Heart left ventricle (tissue), 16 donors: ENCODE measurements at regions of chr1 and their contacts with region 1.

Region 1: DNA sequence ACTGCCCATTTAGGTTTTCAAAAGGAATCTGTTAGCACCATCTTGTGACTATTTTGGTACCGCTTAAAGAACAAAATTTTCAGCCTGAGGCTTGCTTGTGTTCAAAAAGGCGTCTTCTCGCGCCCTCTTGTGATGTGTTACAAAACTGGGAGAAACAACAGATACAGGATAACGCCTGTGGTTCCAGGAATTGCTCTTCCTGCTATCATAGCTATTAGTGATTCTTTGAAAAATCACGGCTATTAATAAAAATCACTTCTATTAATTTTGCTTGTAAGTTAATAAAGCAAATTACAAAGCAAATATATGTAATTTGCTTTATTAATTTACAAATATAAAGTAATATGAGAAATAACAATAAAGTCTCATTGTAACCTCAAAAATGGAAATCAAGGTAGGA is 82.2 kb upstream of the ABCD3 start:
- DNase-seq: peak in 4 of 5 donors; percentile 67 to 79 (median 76)
- ATAC-seq: peak; percentile 65 to 96 (median 90)
- H3K4me3 ChIP-seq: peak overlapping the region in 1 of 12 donors; percentile 19
- H3K27ac ChIP-seq: peak overlapping the region in 3 of 12 donors; percentile 61 to 83 (median 74)
- H3K4me1 ChIP-seq: peaks cover 0 to 20% (median 13%) of the 10 kb centered on the region in 12 donors
- H3K27me3 ChIP-seq: peaks cover 0 to under 1% (median 0%) of the 10 kb centered on the region in 9 donors
- CTCF ChIP-seq: peak; percentile 71 to 98 (median 95)
- POLR2A ChIP-seq: no peak

Region 2: DNA sequence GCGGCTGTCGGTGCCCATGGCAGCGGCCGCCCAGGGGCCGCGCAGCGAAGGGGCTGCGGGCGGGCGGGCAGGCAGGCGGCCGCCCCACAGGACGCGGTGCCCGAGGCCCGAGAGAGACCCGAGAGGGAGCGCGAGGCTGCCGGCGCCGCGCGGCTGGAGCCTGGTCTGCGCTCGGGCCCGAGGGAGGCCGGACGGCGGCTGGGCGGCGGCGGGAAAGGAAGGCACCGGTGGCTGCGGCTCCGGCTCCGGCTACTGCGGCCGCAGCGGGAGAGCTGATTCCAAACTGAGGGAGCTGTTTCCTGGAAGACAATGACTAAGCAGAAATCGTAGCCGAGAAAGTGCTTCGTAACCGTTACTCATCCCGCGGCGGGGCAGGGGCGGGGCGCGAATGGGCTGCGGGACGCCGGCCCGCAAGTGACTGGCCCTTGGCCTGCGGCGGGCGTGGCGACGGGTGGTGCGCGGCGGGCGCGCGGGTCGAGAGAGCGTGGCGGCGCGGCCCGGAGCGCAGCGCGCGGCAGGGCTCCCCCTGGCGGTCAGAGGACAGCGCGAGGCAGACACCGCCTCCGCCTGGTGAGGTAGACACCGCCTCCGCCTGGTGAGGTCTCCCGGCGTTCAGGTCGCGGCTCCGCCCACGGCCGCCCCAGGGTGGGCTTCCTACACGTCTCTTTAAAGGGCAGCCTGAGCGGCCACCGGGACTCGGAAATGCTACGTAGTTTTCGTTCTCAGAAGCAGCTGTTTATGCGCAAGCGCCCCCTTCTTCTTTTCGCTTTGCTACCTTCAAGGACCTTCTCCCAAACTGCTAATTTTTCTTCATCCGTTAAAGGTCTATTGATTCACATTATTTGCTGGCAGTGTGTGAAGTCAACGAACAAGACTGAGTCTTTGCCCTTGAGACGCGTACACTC is 426.6 kb before region 1 on chr1 and contains the start of gene GCLM:
- intact Hi-C with region 1: loop called in 1 of 10 experiments (anchors 10 kb)
- DNase-seq: peak; percentile 88 to 97 (median 95)
- ATAC-seq: peak; percentile 93 to 98 (median 96)
- H3K4me3 ChIP-seq: peak within 1 kb of the TSS; percentile 70 to 99 (median 88)
- H3K27ac ChIP-seq: peak within 1 kb of the TSS; percentile 74 to 92 (median 83)
- H3K4me1 ChIP-seq: peaks cover 0 to 41% (median 13%) of the 10 kb centered on the region in 12 donors
- H3K27me3 ChIP-seq: no peaks in the 10 kb centered on the region
- CTCF ChIP-seq: peak; percentile 68 to 100 (median 92)
- POLR2A ChIP-seq: peak in 1 of 2 donors; percentile 69
- total RNA-seq, gene GCLM: 4.2 to 21.9 (median 12.5) TPM

Region 3: GRCh38 chr1:94025383-94026340 is 310.3 kb before region 1 on chr1:
- intact Hi-C with region 1: loop called (anchors 1 to 5 kb)
- DNase-seq: no peak
- ATAC-seq: peak in 2 of 4 donors; percentile 44 to 51
- H3K4me3 ChIP-seq: peak overlapping the region in 1 of 12 donors; percentile 4
- H3K27ac ChIP-seq: no peak overlapping the region
- H3K4me1 ChIP-seq: peaks cover 0 to 23% (median 5%) of the 10 kb centered on the region in 12 donors
- H3K27me3 ChIP-seq: no peaks in the 10 kb centered on the region
- CTCF ChIP-seq: peak; percentile 72 to 89 (median 81)
- POLR2A ChIP-seq: no peak

Region 4: GRCh38 chr1:94039514-94039870 is 296.5 kb before region 1 on chr1:
- intact Hi-C with region 1: loop called in 4 of 10 experiments (anchors 1 to 2 kb)
- DNase-seq: peak; percentile 69 to 86 (median 74)
- ATAC-seq: peak; percentile 10 to 51 (median 32)
- H3K4me3 ChIP-seq: no peak overlapping the region
- H3K27ac ChIP-seq: peak overlapping the region; percentile 48 to 80 (median 60)
- H3K4me1 ChIP-seq: peaks cover 4 to 44% (median 31%) of the 10 kb centered on the region in 12 donors
- H3K27me3 ChIP-seq: peaks cover 0 to 9% (median 0%) of the 10 kb centered on the region in 9 donors
- CTCF ChIP-seq: peak; percentile 77 to 92 (median 87)
- POLR2A ChIP-seq: no peak

Region 5: DNA sequence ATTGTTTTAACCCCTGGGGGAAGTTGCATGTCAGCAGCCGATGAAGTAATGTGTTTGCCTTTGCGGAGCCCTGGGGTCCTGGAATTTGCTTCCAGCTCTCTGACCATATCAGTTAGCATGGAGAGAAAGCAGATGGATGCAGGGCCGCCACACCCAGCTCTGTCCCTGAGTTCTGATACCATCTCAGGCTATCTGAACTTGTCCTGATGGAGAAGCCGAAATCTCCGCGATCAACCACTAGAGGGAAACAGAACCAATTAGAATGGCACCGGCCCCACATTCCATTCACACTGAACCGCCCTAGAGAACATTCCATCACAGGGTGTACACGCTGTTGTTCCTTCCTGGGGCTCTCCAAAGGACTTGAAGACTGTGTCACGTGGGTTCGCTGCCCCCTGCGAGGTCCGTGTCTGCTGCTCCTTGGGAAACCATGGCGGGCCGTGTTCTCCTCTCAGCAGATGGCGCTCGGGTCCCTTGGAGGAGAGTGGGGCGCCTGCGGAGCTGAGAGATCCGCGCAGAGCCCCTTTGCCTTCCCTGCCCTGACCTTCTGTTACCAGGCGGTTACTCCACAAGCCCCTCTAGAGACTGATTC is 290.4 kb before region 1 on chr1:
- intact Hi-C with region 1: loop called in 7 of 10 experiments (anchors 1 to 5 kb)
- DNase-seq: peak; percentile 91 to 95 (median 91)
- ATAC-seq: peak; percentile 89 to 94 (median 91)
- H3K4me3 ChIP-seq: peak overlapping the region in 7 of 12 donors; percentile 12 to 34 (median 20)
- H3K27ac ChIP-seq: peak overlapping the region; percentile 77 to 97 (median 91)
- H3K4me1 ChIP-seq: peaks cover 11 to 81% (median 49%) of the 10 kb centered on the region in 12 donors
- H3K27me3 ChIP-seq: no peaks in the 10 kb centered on the region
- CTCF ChIP-seq: peak; percentile 50 to 94 (median 78)
- POLR2A ChIP-seq: peak in 1 of 2 donors; percentile 16

Region 6: GRCh38 chr1:94180650-94181049 is 155.3 kb before region 1 on chr1:
- intact Hi-C with region 1: loop called in 1 of 10 experiments (anchors 10 kb)
- DNase-seq: no peak
- ATAC-seq: no peak
- H3K4me3 ChIP-seq: no peak overlapping the region
- H3K27ac ChIP-seq: peak overlapping the region in 1 of 12 donors; percentile 4
- H3K4me1 ChIP-seq: peaks cover 0 to 30% (median 13%) of the 10 kb centered on the region in 12 donors
- H3K27me3 ChIP-seq: no peaks in the 10 kb centered on the region
- CTCF ChIP-seq: no peak
- POLR2A ChIP-seq: no peak

Region 7: GRCh38 chr1:94383966-94384408 is 48.0 kb after region 1 on chr1:
- intact Hi-C with region 1: no loop called
- DNase-seq: no peak
- ATAC-seq: peak in 2 of 4 donors; percentile 64 to 77
- H3K4me3 ChIP-seq: no peak overlapping the region
- H3K27ac ChIP-seq: no peak overlapping the region
- H3K4me1 ChIP-seq: peaks cover 0 to 13% (median 0%) of the 10 kb centered on the region in 12 donors
- H3K27me3 ChIP-seq: no peaks in the 10 kb centered on the region
- CTCF ChIP-seq: no peak
- POLR2A ChIP-seq: no peak

Region 8: GRCh38 chr1:94463765-94464330 is 127.9 kb after region 1 on chr1:
- intact Hi-C with region 1: loop called in 9 of 10 experiments (anchors 5 to 10 kb)
- DNase-seq: no peak
- ATAC-seq: peak; percentile 69 to 83 (median 78)
- H3K4me3 ChIP-seq: no peak overlapping the region
- H3K27ac ChIP-seq: peak overlapping the region in 1 of 12 donors; percentile 58
- H3K4me1 ChIP-seq: peaks cover 0 to 12% (median 6%) of the 10 kb centered on the region in 12 donors
- H3K27me3 ChIP-seq: no peaks in the 10 kb centered on the region
- CTCF ChIP-seq: peak; percentile 16 to 70 (median 54)
- POLR2A ChIP-seq: no peak